ENCODE measurements at regions of chr2 and their contacts with region 1.

Region 1: DNA sequence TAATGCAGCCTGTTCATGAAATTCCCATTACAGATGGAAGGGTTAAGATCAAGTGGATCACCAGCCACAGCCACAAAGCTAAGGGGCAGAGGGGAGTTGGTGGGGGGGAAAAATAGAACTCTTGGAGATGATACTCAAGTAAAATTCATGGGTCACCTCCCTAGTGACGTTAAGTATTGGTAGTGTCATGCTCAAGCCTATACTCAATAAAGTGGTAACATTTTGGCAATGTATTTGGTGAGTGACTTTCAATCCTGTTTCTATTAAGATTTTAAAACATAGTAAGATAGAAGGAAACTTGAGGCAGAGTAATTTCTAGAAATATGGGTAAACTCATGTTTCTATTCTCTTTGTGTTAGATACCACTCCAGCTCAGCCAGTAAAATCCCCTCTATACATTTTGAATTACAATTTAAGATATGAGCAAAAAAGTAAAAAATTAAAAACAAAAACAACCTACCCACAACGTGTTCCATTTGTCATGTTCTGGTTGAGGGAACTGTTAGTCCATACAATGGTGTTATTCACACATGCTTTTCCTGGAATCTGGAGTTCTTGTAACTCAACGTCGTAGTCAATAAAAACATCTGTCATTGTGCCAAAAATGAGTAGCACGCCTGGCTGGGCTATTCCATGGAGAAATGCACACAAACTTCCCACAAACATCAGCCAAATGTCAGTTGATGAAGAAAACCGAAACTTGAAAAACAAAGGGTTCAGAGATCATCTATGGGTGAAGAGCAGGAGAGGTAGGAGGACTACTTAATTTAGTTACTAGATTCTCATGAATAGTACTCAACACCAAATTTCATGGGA is 18.1 kb downstream of the ABCB11 start:
- DNase-seq: no peak
- ATAC-seq: peak in 1 of 8 donors; percentile 5
- H3K4me3 ChIP-seq: no peak overlapping the region
- H3K27ac ChIP-seq: peak overlapping the region in 7 of 10 donors; percentile 5 to 78 (median 55)
- H3K4me1 ChIP-seq: peaks cover 0 to 18% (median 6%) of the 10 kb centered on the region in 9 donors
- H3K27me3 ChIP-seq: no peaks in the 10 kb centered on the region
- CTCF ChIP-seq: no peak

Region 2: DNA sequence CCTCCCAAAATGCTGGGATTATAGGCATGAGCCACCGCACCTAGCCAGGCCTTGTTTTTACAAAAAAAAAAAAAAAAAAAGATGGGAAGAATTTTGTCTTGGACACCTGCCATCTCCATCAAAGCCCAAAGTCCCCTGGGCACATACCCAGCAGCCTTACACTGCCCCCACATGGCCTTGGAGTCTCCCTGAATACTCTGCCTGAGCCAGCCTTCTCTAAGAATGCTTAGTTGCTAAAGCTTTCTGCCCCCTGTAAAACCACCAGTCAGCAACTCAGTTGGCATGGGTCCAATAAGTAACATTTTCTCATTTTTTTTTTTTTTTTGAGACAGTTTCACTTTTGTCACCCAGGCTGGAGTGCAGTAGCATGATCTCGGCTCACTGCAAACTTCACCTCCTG is 163.4 kb before region 1 on chr2:
- intact Hi-C with region 1: no loop called
- DNase-seq: peak in 1 of 2 donors; percentile 39
- ATAC-seq: peak in 7 of 8 donors; percentile 48 to 82 (median 74)
- H3K4me3 ChIP-seq: no peak overlapping the region
- H3K27ac ChIP-seq: no peak overlapping the region
- H3K4me1 ChIP-seq: peaks cover 0 to 4% (median 0%) of the 10 kb centered on the region in 9 donors
- H3K27me3 ChIP-seq: no peaks in the 10 kb centered on the region
- CTCF ChIP-seq: peak in 7 of 9 donors; percentile 29 to 55 (median 46)

Region 3: GRCh38 chr2:168929031-168929430 is 84.0 kb before region 1 on chr2:
- intact Hi-C with region 1: no loop called
- DNase-seq: no peak
- ATAC-seq: no peak
- H3K4me3 ChIP-seq: no peak overlapping the region
- H3K27ac ChIP-seq: no peak overlapping the region
- H3K4me1 ChIP-seq: no peaks in the 10 kb centered on the region
- H3K27me3 ChIP-seq: peaks cover 0 to 30% (median 6%) of the 10 kb centered on the region in 7 donors
- CTCF ChIP-seq: no peak

Region 4: GRCh38 chr2:169072163-169072925 is 59.3 kb after region 1 on chr2:
- intact Hi-C with region 1: loop called in 1 of 10 experiments (anchors 5 kb)
- DNase-seq: no peak
- ATAC-seq: peak in 6 of 8 donors; percentile 49 to 84 (median 61)
- H3K4me3 ChIP-seq: peak overlapping the region in 1 of 10 donors; percentile 35
- H3K27ac ChIP-seq: peak overlapping the region in 1 of 10 donors; percentile 65
- H3K4me1 ChIP-seq: peaks cover 0 to 36% (median 0%) of the 10 kb centered on the region in 9 donors
- H3K27me3 ChIP-seq: no peaks in the 10 kb centered on the region
- CTCF ChIP-seq: no peak

Measured in heart right ventricle (tissue), 16 donors.